Naive thymus-derived CD4-positive, alpha-beta T cell (primary cell): ENCODE measurements at regions of chr3 and their contacts with region 1.

Region 1: GRCh38 chr3:77588863-77589262 is 549.0 kb downstream of the ROBO2 start:
- DNase-seq: no peak
- ATAC-seq: no peak
- H3K4me3 ChIP-seq: no peak overlapping the region
- H3K4me3 Mint-ChIP-seq: no peak overlapping the region
- H3K27ac ChIP-seq: no peak overlapping the region
- H3K27ac Mint-ChIP-seq: no peak overlapping the region
- H3K4me1 ChIP-seq: no peaks in the 10 kb centered on the region
- H3K4me1 Mint-ChIP-seq: no peaks in the 10 kb centered on the region
- H3K27me3 ChIP-seq: no peaks in the 10 kb centered on the region
- H3K27me3 Mint-ChIP-seq: no peaks in the 10 kb centered on the region

Region 2: DNA sequence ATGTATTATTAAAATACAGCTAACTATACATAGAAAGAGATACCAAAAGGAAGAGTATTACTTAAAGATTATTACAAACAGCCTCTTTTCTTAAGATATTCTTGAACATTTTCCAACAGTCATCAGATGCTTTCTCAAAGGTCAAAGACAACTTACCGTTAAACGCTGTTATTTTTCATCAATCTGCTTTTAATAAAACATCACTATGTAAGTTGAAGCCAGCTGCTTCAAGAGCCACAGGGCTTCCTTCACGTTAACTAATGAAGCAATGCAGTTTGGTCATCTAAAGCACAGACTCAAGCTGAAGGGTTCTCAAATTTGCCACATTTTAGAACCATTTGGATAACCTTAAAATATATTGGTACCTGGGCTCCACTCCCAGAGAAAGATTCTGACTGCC is 29.8 kb after region 1 on chr3:
- CTCF ChIA-PET with region 1: no interaction called
- POLR2A ChIA-PET with region 1: no interaction called
- intact Hi-C with region 1: loop called in 1 of 2 experiments (anchors 1 kb)
- DNase-seq: no peak
- ATAC-seq: no peak
- H3K4me3 ChIP-seq: no peak overlapping the region
- H3K4me3 Mint-ChIP-seq: no peak overlapping the region
- H3K27ac ChIP-seq: no peak overlapping the region
- H3K27ac Mint-ChIP-seq: no peak overlapping the region
- H3K4me1 ChIP-seq: no peaks in the 10 kb centered on the region
- H3K4me1 Mint-ChIP-seq: no peaks in the 10 kb centered on the region
- H3K27me3 ChIP-seq: no peaks in the 10 kb centered on the region
- H3K27me3 Mint-ChIP-seq: no peaks in the 10 kb centered on the region

Region 3: GRCh38 chr3:77648664-77649063 is 59.8 kb after region 1 on chr3:
- CTCF ChIA-PET with region 1: no interaction called
- POLR2A ChIA-PET with region 1: no interaction called
- intact Hi-C with region 1: no loop called
- DNase-seq: no peak
- ATAC-seq: no peak
- H3K4me3 ChIP-seq: no peak overlapping the region
- H3K4me3 Mint-ChIP-seq: no peak overlapping the region
- H3K27ac ChIP-seq: no peak overlapping the region
- H3K27ac Mint-ChIP-seq: no peak overlapping the region
- H3K4me1 ChIP-seq: no peaks in the 10 kb centered on the region
- H3K4me1 Mint-ChIP-seq: no peaks in the 10 kb centered on the region
- H3K27me3 ChIP-seq: no peaks in the 10 kb centered on the region
- H3K27me3 Mint-ChIP-seq: no peaks in the 10 kb centered on the region

Region 4: DNA sequence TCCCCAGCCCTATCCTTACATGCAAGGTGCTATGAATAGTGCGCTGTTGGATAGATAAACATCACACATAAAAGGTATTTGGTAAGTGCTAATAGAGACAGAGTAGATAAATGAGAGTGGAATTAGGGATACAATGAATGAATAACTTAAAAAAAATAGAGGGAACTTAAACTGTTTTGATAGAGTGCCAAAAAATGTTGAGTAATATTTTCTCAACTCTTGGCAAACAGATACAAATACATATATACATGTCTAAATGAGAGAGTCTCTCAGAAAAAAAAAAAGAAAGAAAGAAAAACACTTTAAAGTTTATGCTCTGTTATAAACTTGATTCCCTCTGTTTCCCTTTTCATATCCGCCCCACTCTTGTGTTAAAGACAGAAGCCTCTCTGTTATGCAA is 118.4 kb after region 1 on chr3:
- CTCF ChIA-PET with region 1: no interaction called
- POLR2A ChIA-PET with region 1: no interaction called
- intact Hi-C with region 1: no loop called
- DNase-seq: no peak
- ATAC-seq: no peak
- H3K4me3 ChIP-seq: no peak overlapping the region
- H3K4me3 Mint-ChIP-seq: no peak overlapping the region
- H3K27ac ChIP-seq: no peak overlapping the region
- H3K27ac Mint-ChIP-seq: no peak overlapping the region
- H3K4me1 ChIP-seq: no peaks in the 10 kb centered on the region
- H3K4me1 Mint-ChIP-seq: no peaks in the 10 kb centered on the region
- H3K27me3 ChIP-seq: no peaks in the 10 kb centered on the region
- H3K27me3 Mint-ChIP-seq: no peaks in the 10 kb centered on the region